T-cell (primary cell): ENCODE measurements at regions of chr6 and their contacts with region 1.

Region 1: GRCh38 chr6:112180095-112180820 is 74.1 kb downstream of the LAMA4 start:
- DNase-seq: peak in 24 of 35 experiments; percentile 13 to 85 (median 36)
- ATAC-seq: peak in 3 of 4 experiments; percentile 61 to 69 (median 61)
- H3K4me3 ChIP-seq: no peak overlapping the region
- H3K4me3 Mint-ChIP-seq: no peak overlapping the region
- H3K27ac ChIP-seq: no peak overlapping the region
- H3K27ac Mint-ChIP-seq: no peak overlapping the region
- H3K4me1 ChIP-seq: no peaks in the 10 kb centered on the region
- H3K4me1 Mint-ChIP-seq: no peaks in the 10 kb centered on the region
- H3K27me3 ChIP-seq: peaks cover 0 to 4% of the 10 kb centered on the region in 2 experiments
- H3K27me3 Mint-ChIP-seq: peaks cover 16 to 31% of the 10 kb centered on the region in 2 donors

Region 2: GRCh38 chr6:112163295-112164257 is 16.7 kb before region 1 on chr6:
- CTCF ChIA-PET with region 1: interaction called, 6 to 14 read pairs
- POLR2A ChIA-PET with region 1: no interaction called
- DNase-seq: peak; percentile 42 to 82 (median 68)
- ATAC-seq: peak; percentile 91 to 98 (median 96)
- H3K4me3 ChIP-seq: peak overlapping the region in 1 of 2 donors; percentile 5
- H3K4me3 Mint-ChIP-seq: peak overlapping the region; percentile 34 to 56 (median 55)
- H3K27ac ChIP-seq: no peak overlapping the region
- H3K27ac Mint-ChIP-seq: peak overlapping the region; percentile 19 to 54
- H3K4me1 ChIP-seq: peaks cover 2 to 8% of the 10 kb centered on the region in 2 experiments
- H3K4me1 Mint-ChIP-seq: peaks cover 14 to 15% (median 14%) of the 10 kb centered on the region in 3 donors
- H3K27me3 ChIP-seq: peaks cover 0 to 10% of the 10 kb centered on the region in 2 experiments
- H3K27me3 Mint-ChIP-seq: peaks cover 44 to 51% of the 10 kb centered on the region in 2 donors

Region 3: DNA sequence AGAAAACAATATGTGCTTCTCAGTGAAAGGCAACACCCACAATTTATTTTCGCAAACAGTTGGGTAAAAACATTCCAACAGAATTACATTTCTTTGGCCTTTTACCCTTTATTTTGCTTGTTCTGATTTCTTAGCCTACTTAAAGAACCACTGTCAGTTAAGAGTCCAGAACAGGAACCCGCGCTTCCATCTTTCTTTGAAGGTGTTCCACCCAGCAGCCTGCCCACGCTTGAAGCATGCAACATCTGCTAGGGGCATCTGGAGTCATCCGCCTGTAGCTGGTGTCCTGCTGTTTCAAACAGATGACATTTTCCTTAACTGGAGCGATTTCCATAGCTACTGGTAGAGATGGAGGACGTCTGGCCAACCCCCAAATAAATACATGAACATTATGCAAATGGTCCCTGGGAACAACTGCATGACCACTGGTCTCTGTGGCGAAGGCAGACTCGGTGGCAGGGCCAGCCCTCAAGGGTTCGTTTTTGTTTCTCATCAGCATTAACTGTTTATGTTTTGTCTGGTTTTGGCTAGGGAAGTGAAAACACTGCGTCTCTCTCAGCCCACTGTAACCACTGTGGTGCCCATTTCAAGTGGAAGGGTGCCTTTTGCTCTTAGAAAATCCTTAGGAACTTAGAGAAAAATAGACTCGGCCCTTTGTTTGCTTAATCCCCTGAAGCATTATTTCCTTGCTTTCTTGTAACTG is 22.5 kb after region 1 on chr6:
- CTCF ChIA-PET with region 1: no interaction called
- POLR2A ChIA-PET with region 1: no interaction called
- DNase-seq: no peak
- ATAC-seq: no peak
- H3K4me3 ChIP-seq: no peak overlapping the region
- H3K4me3 Mint-ChIP-seq: peak overlapping the region in 1 of 3 donors; percentile 53
- H3K27ac ChIP-seq: no peak overlapping the region
- H3K27ac Mint-ChIP-seq: no peak overlapping the region
- H3K4me1 ChIP-seq: no peaks in the 10 kb centered on the region
- H3K4me1 Mint-ChIP-seq: peaks cover 0 to 17% (median 0%) of the 10 kb centered on the region in 3 donors
- H3K27me3 ChIP-seq: peaks cover 0 to 6% of the 10 kb centered on the region in 2 experiments
- H3K27me3 Mint-ChIP-seq: peaks cover 30 to 34% of the 10 kb centered on the region in 2 donors

Region 4: DNA sequence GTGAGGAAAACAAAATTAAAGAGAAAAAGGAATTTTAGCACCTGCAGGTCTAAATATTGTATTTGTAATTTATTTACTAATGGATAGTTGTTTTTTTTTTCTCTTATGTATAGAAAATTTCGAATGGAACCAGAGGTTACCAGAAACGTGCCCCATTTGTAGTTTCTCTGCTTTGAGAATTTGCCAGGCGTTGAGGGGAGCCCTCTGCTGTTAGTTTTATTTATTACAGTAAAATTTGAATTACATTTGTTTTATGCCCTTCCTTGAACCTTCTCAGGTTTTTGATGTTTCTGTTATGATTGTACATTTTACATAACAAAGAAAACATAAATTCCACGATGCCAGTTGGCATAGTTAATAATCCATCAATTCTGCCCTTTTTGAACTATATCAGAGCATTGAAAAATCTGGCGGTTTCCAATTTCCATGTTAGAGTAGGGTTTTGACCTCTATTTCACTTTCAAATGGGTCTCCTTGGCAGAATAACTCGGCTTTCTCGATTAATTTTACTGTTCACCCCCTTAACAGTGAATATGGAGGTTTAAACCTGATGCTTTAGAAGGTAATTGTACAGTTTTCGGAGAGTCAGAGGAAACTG is 131.8 kb after region 1 on chr6:
- CTCF ChIA-PET with region 1: interaction called, 24 to 52 read pairs
- POLR2A ChIA-PET with region 1: interaction called in 1 of 2 experiments, 3 read pairs
- DNase-seq: peak in 4 of 35 experiments; percentile 1 to 51 (median 6)
- ATAC-seq: no peak
- H3K4me3 ChIP-seq: no peak overlapping the region
- H3K4me3 Mint-ChIP-seq: no peak overlapping the region
- H3K27ac ChIP-seq: no peak overlapping the region
- H3K27ac Mint-ChIP-seq: no peak overlapping the region
- H3K4me1 ChIP-seq: no peaks in the 10 kb centered on the region
- H3K4me1 Mint-ChIP-seq: no peaks in the 10 kb centered on the region
- H3K27me3 ChIP-seq: peaks cover 0 to 3% of the 10 kb centered on the region in 2 experiments
- H3K27me3 Mint-ChIP-seq: peaks cover 14 to 16% of the 10 kb centered on the region in 2 donors

Region 5: GRCh38 chr6:113858480-113859348 is 1678.5 kb after region 1 on chr6:
- CTCF ChIA-PET with region 1: interaction called, 7 to 10 read pairs
- POLR2A ChIA-PET with region 1: no interaction called
- DNase-seq: peak; percentile 37 to 84 (median 58)
- ATAC-seq: peak; percentile 75 to 91 (median 83)
- H3K4me3 ChIP-seq: peak overlapping the region; percentile 45 to 89
- H3K4me3 Mint-ChIP-seq: peak overlapping the region in 2 of 3 donors; percentile 28 to 67
- H3K27ac ChIP-seq: no peak overlapping the region
- H3K27ac Mint-ChIP-seq: no peak overlapping the region
- H3K4me1 ChIP-seq: peaks cover 22 to 49% of the 10 kb centered on the region in 2 experiments
- H3K4me1 Mint-ChIP-seq: peaks cover 0 to 24% (median 21%) of the 10 kb centered on the region in 3 donors
- H3K27me3 ChIP-seq: peaks cover 0 to 51% of the 10 kb centered on the region in 2 experiments
- H3K27me3 Mint-ChIP-seq: peaks cover 30 to 41% of the 10 kb centered on the region in 2 donors

Region 6: GRCh38 chr6:113909234-113909856 is 1729.1 kb after region 1 on chr6:
- CTCF ChIA-PET with region 1: interaction called, 7 to 13 read pairs
- POLR2A ChIA-PET with region 1: no interaction called
- DNase-seq: peak in 3 of 35 experiments; percentile 6 to 66 (median 8)
- ATAC-seq: peak in 1 of 4 experiments; percentile 40
- H3K4me3 ChIP-seq: no peak overlapping the region
- H3K4me3 Mint-ChIP-seq: no peak overlapping the region
- H3K27ac ChIP-seq: no peak overlapping the region
- H3K27ac Mint-ChIP-seq: no peak overlapping the region
- H3K4me1 ChIP-seq: no peaks in the 10 kb centered on the region
- H3K4me1 Mint-ChIP-seq: peaks cover 0 to 5% (median 2%) of the 10 kb centered on the region in 3 donors
- H3K27me3 ChIP-seq: no peaks in the 10 kb centered on the region
- H3K27me3 Mint-ChIP-seq: peaks cover 3 to 5% of the 10 kb centered on the region in 2 donors